ENCODE measurements at regions of chr6 and their contacts with region 1.

Region 1: GRCh38 chr6:79078075-79079025 is at the start of gene PHIP:
- DNase-seq: peak; percentile 79
- ATAC-seq: peak; percentile 66
- H3K4me3 ChIP-seq: peak within 1 kb of the TSS; percentile 99
- H3K27ac ChIP-seq: peak within 1 kb of the TSS; percentile 75
- H3K4me1 ChIP-seq: peaks cover 11% of the 10 kb centered on the region; the same call in 1 of the 2 replicates
- H3K27me3 ChIP-seq: no peaks in the 10 kb centered on the region
- CTCF ChIP-seq: no peak
- total RNA-seq, gene PHIP: 20.8 and 21.2 TPM in 2 replicates

Region 2: GRCh38 chr6:79170959-79171358 is 92.6 kb after region 1 on chr6:
- CTCF ChIA-PET with region 1: no interaction called
- POLR2A ChIA-PET with region 1: no interaction called
- intact Hi-C with region 1: loop called (anchors 10 kb)
- DNase-seq: peak; percentile 76
- ATAC-seq: peak; percentile 90
- H3K4me3 ChIP-seq: peak overlapping the region; percentile 38; the same call in 1 of the 2 replicates
- H3K27ac ChIP-seq: no peak overlapping the region
- H3K4me1 ChIP-seq: peaks cover 12% of the 10 kb centered on the region
- H3K27me3 ChIP-seq: no peaks in the 10 kb centered on the region
- CTCF ChIP-seq: no peak

Region 3: GRCh38 chr6:79225716-79226599 is 147.6 kb after region 1 on chr6:
- CTCF ChIA-PET with region 1: no interaction called
- POLR2A ChIA-PET with region 1: no interaction called
- intact Hi-C with region 1: no loop called
- DNase-seq: no peak
- ATAC-seq: no peak
- H3K4me3 ChIP-seq: no peak overlapping the region
- H3K27ac ChIP-seq: no peak overlapping the region
- H3K4me1 ChIP-seq: peaks cover 12% of the 10 kb centered on the region
- H3K27me3 ChIP-seq: no peaks in the 10 kb centered on the region
- CTCF ChIP-seq: no peak

Region 4: GRCh38 chr6:79536954-79537747 is 458.8 kb after region 1 on chr6 and contains the start of gene LCA5:
- CTCF ChIA-PET with region 1: no interaction called
- POLR2A ChIA-PET with region 1: no interaction called
- intact Hi-C with region 1: loop called (anchors 5 kb)
- DNase-seq: peak; percentile 92
- ATAC-seq: peak; percentile 95
- H3K4me3 ChIP-seq: peak within 1 kb of the TSS; percentile 93
- H3K27ac ChIP-seq: peak within 1 kb of the TSS; percentile 41
- H3K4me1 ChIP-seq: no peaks in the 10 kb centered on the region
- H3K27me3 ChIP-seq: no peaks in the 10 kb centered on the region
- CTCF ChIP-seq: no peak
- total RNA-seq, gene LCA5: 0.73 and 0.86 TPM in 2 replicates

Measured in PC-3 (cell line).